ENCODE measurements at regions of chr10 and their contacts with region 1.

Region 1: GRCh38 chr10:60944159-60944909 is at the start of gene RHOBTB1:
- DNase-seq: peak; percentile 84 to 88 (median 88)
- ATAC-seq: peak; percentile 83 to 95 (median 92)
- H3K4me3 ChIP-seq: peak within 1 kb of the TSS; percentile 82 to 96 (median 90)
- H3K27ac ChIP-seq: peak within 1 kb of the TSS; percentile 96 to 100 (median 98)
- H3K4me1 ChIP-seq: peaks cover 0 to 33% (median 16%) of the 10 kb centered on the region in 12 donors
- H3K27me3 ChIP-seq: no peaks in the 10 kb centered on the region
- CTCF ChIP-seq: no peak
- POLR2A ChIP-seq: peak; percentile 14 to 88
- total RNA-seq, gene RHOBTB1: 9.6 to 41.3 (median 16.0) TPM

Region 2: GRCh38 chr10:60778214-60779029 is 165.9 kb before region 1 on chr10 and contains the start of gene CDK1:
- intact Hi-C with region 1: no loop called
- DNase-seq: peak; percentile 95 to 98 (median 97)
- ATAC-seq: peak; percentile 99 to 100 (median 100)
- H3K4me3 ChIP-seq: peak within 1 kb of the TSS; percentile 34 to 75 (median 63)
- H3K27ac ChIP-seq: peak within 1 kb of the TSS in 5 of 12 donors; percentile 5 to 51 (median 33)
- H3K4me1 ChIP-seq: peaks cover 0 to 16% (median 3%) of the 10 kb centered on the region in 12 donors
- H3K27me3 ChIP-seq: no peaks in the 10 kb centered on the region
- CTCF ChIP-seq: no peak
- POLR2A ChIP-seq: no peak
- total RNA-seq, gene CDK1: 0.44 to 13.8 (median 1.1) TPM in 8 of 9 donors, not detected in the other

Region 3: DNA sequence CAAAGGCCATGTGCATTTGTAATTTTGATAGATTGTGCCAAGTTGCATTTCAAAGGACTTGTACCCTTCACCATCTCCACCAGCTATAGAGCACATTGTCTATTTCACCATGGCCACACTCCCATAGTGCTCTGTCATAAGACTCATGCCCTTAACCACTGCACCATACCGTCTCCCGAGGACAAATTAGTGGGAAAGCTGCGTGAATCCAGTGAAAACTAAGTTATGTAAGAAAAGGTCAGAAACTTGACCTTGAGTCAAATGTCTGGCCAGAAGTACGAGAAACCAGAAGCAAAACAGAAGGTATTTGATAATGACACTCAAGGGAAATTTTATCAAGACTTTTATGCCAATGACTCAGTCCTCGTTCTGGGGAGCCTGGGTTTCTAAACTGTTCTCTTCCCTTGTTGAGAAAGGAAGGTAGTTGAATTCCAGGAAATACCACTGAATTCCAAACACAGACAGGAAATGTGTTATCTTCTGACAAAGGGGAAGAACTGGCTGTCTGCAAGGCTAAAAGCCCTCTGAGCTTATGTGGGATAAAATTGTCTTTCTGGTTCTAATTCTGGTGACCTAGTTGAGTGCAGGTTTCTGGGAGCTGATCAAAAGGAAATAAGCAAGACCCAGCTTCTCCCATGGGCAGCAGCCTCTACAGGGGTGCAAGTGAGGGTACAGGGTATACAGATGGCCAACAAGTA is 116.4 kb before region 1 on chr10:
- intact Hi-C with region 1: loop called in 2 of 10 experiments (anchors 5 kb)
- DNase-seq: peak in 1 of 5 donors; percentile 39
- ATAC-seq: peak; percentile 55 to 93 (median 92)
- H3K4me3 ChIP-seq: no peak overlapping the region
- H3K27ac ChIP-seq: peak overlapping the region in 11 of 12 donors; percentile 5 to 75 (median 61)
- H3K4me1 ChIP-seq: peaks cover 0 to 30% (median 22%) of the 10 kb centered on the region in 12 donors
- H3K27me3 ChIP-seq: no peaks in the 10 kb centered on the region
- CTCF ChIP-seq: no peak
- POLR2A ChIP-seq: no peak

Region 4: DNA sequence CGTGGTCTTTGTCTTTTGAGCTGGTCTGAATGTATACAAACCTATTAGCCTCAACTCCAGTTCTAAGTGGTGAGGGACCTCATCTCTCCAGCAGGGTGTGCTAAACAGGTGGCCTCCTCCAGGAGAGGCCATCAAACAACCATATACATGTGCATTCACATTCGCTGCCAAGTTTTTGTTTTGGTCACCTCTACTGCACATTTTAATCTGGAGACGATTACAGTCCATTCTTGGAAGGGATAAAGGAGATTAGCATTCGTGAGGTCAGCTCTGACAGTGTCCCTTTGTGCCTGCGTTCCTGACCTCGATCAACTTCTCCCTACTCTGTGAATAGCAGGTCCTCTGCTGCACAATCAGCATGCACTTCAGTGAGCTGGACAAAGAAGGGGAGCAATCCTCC is 61.1 kb before region 1 on chr10:
- intact Hi-C with region 1: loop called in 3 of 10 experiments (anchors 5 to 10 kb)
- DNase-seq: peak in 3 of 5 donors; percentile 37 to 55 (median 44)
- ATAC-seq: peak; percentile 88 to 95 (median 92)
- H3K4me3 ChIP-seq: no peak overlapping the region
- H3K27ac ChIP-seq: peak overlapping the region in 8 of 12 donors; percentile 6 to 65 (median 48)
- H3K4me1 ChIP-seq: peaks cover 0 to 19% (median 8%) of the 10 kb centered on the region in 12 donors
- H3K27me3 ChIP-seq: no peaks in the 10 kb centered on the region
- CTCF ChIP-seq: peak; percentile 16 to 75 (median 54)
- POLR2A ChIP-seq: no peak

Region 5: GRCh38 chr10:60896033-60896432 is 48.3 kb before region 1 on chr10:
- intact Hi-C with region 1: loop called in 4 of 10 experiments (anchors 5 kb)
- DNase-seq: no peak
- ATAC-seq: peak; percentile 12 to 46 (median 40)
- H3K4me3 ChIP-seq: no peak overlapping the region
- H3K27ac ChIP-seq: peak overlapping the region; percentile 37 to 84 (median 65)
- H3K4me1 ChIP-seq: peaks cover 0 to 48% (median 31%) of the 10 kb centered on the region in 12 donors
- H3K27me3 ChIP-seq: no peaks in the 10 kb centered on the region
- CTCF ChIP-seq: no peak
- POLR2A ChIP-seq: no peak

Region 6: GRCh38 chr10:60901561-60902235 is 42.6 kb before region 1 on chr10:
- intact Hi-C with region 1: loop called in 9 of 10 experiments (anchors 5 kb)
- DNase-seq: peak; percentile 81 to 91 (median 86)
- ATAC-seq: peak; percentile 93 to 95 (median 94)
- H3K4me3 ChIP-seq: no peak overlapping the region
- H3K27ac ChIP-seq: peak overlapping the region; percentile 32 to 86 (median 64)
- H3K4me1 ChIP-seq: peaks cover 0 to 68% (median 26%) of the 10 kb centered on the region in 12 donors
- H3K27me3 ChIP-seq: no peaks in the 10 kb centered on the region
- CTCF ChIP-seq: no peak
- POLR2A ChIP-seq: no peak